ENCODE measurements at regions of chr6 and their contacts with region 1.

Region 1: DNA sequence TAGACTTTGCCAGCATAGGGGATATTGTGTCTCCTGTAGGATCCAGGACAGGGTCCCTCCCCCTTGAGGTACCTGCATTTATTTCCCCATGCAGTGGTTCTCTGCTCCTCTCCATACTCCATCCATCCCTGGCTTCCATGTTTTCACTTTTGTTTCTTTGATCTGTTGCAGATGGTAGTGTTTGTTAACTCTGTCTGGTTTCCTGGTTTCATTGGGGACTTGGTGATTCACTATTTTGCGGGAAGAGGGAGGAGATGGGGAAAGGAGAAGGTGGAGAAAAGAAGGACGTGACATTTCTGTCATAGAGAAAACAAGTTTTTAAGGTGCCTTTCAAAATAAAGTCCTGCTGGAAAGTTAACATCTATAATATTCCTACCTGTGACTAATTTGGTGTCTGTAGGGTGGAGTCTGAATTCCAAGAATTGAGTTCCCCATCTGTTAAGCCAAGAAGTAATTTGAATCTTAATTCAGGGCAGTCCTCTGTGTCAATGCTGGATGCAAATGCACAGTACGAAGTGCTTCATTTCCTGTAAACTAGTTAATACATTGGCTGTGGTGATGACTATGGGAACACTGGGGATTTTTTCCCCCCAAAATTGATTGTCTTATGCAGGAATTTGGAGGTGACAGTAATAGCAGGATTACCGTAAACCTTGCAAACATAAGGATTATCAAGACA is 6.9 kb upstream of the RNF144B start:
- DNase-seq: peak; percentile 44
- H3K4me3 ChIP-seq: peak overlapping the region; percentile 65
- H3K27ac ChIP-seq: peak overlapping the region; percentile 66
- H3K4me1 ChIP-seq: peaks cover 62% of the 10 kb centered on the region
- CTCF ChIP-seq: no peak

Region 2: GRCh38 chr6:18343741-18344140 is 36.6 kb before region 1 on chr6:
- CTCF ChIA-PET with region 1: no interaction called
- POLR2A ChIA-PET with region 1: interaction called, 31 read pairs
- intact Hi-C with region 1: no loop called
- DNase-seq: no peak
- H3K4me3 ChIP-seq: peak overlapping the region; percentile 26
- H3K27ac ChIP-seq: peak overlapping the region; percentile 89
- H3K4me1 ChIP-seq: peaks cover 72% of the 10 kb centered on the region
- CTCF ChIP-seq: peak; percentile 44; the same call in 1 of the 2 replicates

Region 3: GRCh38 chr6:18368277-18369102 is 11.8 kb before region 1 on chr6:
- CTCF ChIA-PET with region 1: interaction called, 3 read pairs
- POLR2A ChIA-PET with region 1: interaction called, 16 read pairs
- intact Hi-C with region 1: no loop called
- DNase-seq: no peak
- H3K4me3 ChIP-seq: no peak overlapping the region
- H3K27ac ChIP-seq: no peak overlapping the region
- H3K4me1 ChIP-seq: peaks cover 13% of the 10 kb centered on the region
- CTCF ChIP-seq: no peak

Measured in OCI-LY7 (cell line).